Common myeloid progenitor, CD34-positive (primary cell): ENCODE measurements at regions of chr12 and their contacts with region 1.

Region 1: GRCh38 chr12:4432878-4433739 is 12.5 kb downstream of the FGF6 start:
- DNase-seq: no peak
- H3K4me3 ChIP-seq: no peak overlapping the region
- H3K27ac ChIP-seq: no peak overlapping the region
- H3K4me1 ChIP-seq: peaks cover 1 to 28% (median 6%) of the 10 kb centered on the region in 4 experiments
- H3K27me3 ChIP-seq: no peaks in the 10 kb centered on the region

Region 2: DNA sequence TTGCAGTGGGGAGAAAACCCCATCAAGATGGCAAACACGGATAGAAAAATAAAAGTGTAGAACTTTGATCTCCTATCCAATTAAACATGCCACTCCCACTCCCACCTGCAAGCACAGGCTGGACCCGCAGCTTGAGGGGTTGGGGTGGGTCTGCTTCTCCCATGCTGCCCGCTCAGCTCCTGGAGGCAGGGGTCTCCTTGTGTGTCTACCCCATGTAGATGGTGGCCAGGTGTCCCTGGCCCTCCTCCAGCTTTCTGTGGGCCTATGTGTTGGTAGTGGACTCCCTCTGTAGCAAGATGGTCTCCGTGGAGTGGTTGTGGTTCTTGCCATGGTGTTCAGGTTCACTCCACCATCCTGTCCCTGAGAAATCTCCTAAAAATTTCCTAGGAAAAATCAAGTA is 30.1 kb before region 1 on chr12:
- CTCF ChIA-PET with region 1: no interaction called
- POLR2A ChIA-PET with region 1: no interaction called
- DNase-seq: no peak
- H3K4me3 ChIP-seq: no peak overlapping the region
- H3K27ac ChIP-seq: no peak overlapping the region
- H3K4me1 ChIP-seq: no peaks in the 10 kb centered on the region
- H3K27me3 ChIP-seq: no peaks in the 10 kb centered on the region

Region 3: GRCh38 chr12:4421590-4422031 is 11.5 kb before region 1 on chr12:
- CTCF ChIA-PET with region 1: interaction called, 10 read pairs
- POLR2A ChIA-PET with region 1: no interaction called
- DNase-seq: peak; percentile 33 to 45 (median 38)
- H3K4me3 ChIP-seq: no peak overlapping the region
- H3K27ac ChIP-seq: no peak overlapping the region
- H3K4me1 ChIP-seq: peaks cover 0 to 22% (median 2%) of the 10 kb centered on the region in 4 experiments
- H3K27me3 ChIP-seq: no peaks in the 10 kb centered on the region

Region 4: DNA sequence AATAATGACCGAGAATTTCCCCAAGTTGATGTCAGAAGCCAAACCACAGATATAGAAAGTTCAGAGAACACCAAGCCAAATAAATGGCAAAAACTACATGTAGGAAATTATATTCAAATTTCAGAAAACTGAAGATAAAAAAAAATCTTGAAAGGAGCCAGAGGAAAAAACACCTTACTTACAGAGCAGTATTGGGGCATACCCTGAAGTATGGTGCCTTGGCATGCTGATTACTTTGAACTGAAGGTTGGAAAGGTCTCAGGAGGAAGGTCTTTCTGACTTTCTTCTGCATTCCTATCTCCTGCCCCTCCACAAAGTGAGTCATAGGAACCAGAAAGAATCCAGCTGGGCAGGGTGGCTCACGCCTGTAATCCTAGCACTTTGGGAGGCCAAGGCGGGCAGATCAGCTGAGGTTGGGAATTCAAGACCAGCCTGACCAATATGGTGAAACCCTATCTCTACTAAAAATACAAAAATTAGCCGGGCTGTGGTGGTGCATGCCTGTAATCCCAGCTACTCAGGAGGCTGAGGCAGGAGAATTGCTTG is 21.3 kb after region 1 on chr12:
- CTCF ChIA-PET with region 1: no interaction called
- POLR2A ChIA-PET with region 1: no interaction called
- DNase-seq: no peak
- H3K4me3 ChIP-seq: no peak overlapping the region
- H3K27ac ChIP-seq: no peak overlapping the region
- H3K4me1 ChIP-seq: peaks cover 0 to 14% (median 0%) of the 10 kb centered on the region in 4 experiments
- H3K27me3 ChIP-seq: peaks cover 0 to 2% (median 0%) of the 10 kb centered on the region in 5 experiments

Region 5: GRCh38 chr12:4496145-4496838 is 63.2 kb after region 1 on chr12:
- CTCF ChIA-PET with region 1: no interaction called
- POLR2A ChIA-PET with region 1: no interaction called
- DNase-seq: no peak
- H3K4me3 ChIP-seq: no peak overlapping the region
- H3K27ac ChIP-seq: no peak overlapping the region
- H3K4me1 ChIP-seq: no peaks in the 10 kb centered on the region
- H3K27me3 ChIP-seq: no peaks in the 10 kb centered on the region

Region 6: DNA sequence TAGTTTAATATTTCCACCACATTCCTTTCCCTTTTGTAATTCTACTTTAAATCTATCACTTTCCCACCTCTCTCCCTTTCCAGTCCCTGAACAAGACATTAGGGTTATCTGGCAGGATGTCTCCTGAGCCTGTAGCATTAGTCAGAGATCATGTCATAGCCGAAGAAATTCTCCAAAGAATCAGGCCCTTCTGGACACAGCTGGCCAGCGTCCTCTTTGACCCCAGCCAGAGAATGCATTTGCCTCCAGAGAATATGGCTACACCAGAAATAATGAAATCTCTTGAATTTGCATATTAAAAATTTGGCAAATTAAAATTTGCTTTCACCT is 1055.5 kb after region 1 on chr12:
- CTCF ChIA-PET with region 1: no interaction called
- POLR2A ChIA-PET with region 1: no interaction called
- DNase-seq: no peak
- H3K4me3 ChIP-seq: no peak overlapping the region
- H3K27ac ChIP-seq: no peak overlapping the region
- H3K4me1 ChIP-seq: no peaks in the 10 kb centered on the region
- H3K27me3 ChIP-seq: peaks cover 0 to 4% (median 0%) of the 10 kb centered on the region in 5 experiments